Aorta (tissue), 5 donors: ENCODE measurements at regions of chr10 and their contacts with region 1.

Region 1: GRCh38 chr10:6144406-6145165 is 55.8 kb downstream of the RBM17 start:
- DNase-seq: peak; percentile 95 to 97
- ATAC-seq: peak; percentile 92
- H3K4me3 ChIP-seq: peak overlapping the region; percentile 43 to 79
- H3K27ac ChIP-seq: peak overlapping the region in 1 of 2 donors; percentile 58
- H3K4me1 ChIP-seq: no peaks in the 10 kb centered on the region
- H3K27me3 ChIP-seq: no peaks in the 10 kb centered on the region

Region 2: GRCh38 chr10:6108603-6109443 is 35.8 kb before region 1 on chr10:
- intact Hi-C with region 1: loop called in 1 of 2 experiments (anchors 5 kb)
- DNase-seq: no peak
- ATAC-seq: peak; percentile 73
- H3K4me3 ChIP-seq: no peak overlapping the region
- H3K27ac ChIP-seq: no peak overlapping the region
- H3K4me1 ChIP-seq: no peaks in the 10 kb centered on the region
- H3K27me3 ChIP-seq: no peaks in the 10 kb centered on the region

Region 3: GRCh38 chr10:6124666-6125065 is 19.9 kb before region 1 on chr10:
- intact Hi-C with region 1: loop called in 1 of 2 experiments (anchors 2 kb)
- DNase-seq: peak in 1 of 2 donors; percentile 81
- ATAC-seq: peak; percentile 77
- H3K4me3 ChIP-seq: no peak overlapping the region
- H3K27ac ChIP-seq: peak overlapping the region in 1 of 2 donors; percentile 60
- H3K4me1 ChIP-seq: no peaks in the 10 kb centered on the region
- H3K27me3 ChIP-seq: no peaks in the 10 kb centered on the region